Activated B cell treated with CpG ODN at 0.5 μM for 24 hours (primary cell): ENCODE measurements at regions of chr19 and their contacts with region 1.

Region 1: GRCh38 chr19:53520550-53521372 is 17.2 kb upstream of the ZNF331 start:
- DNase-seq: peak; percentile 71
- ATAC-seq: peak; percentile 97
- H3K4me3 Mint-ChIP-seq: peak overlapping the region; percentile 94
- H3K27ac Mint-ChIP-seq: peak overlapping the region; percentile 87
- H3K4me1 Mint-ChIP-seq: peaks cover 16% of the 10 kb centered on the region
- H3K27me3 Mint-ChIP-seq: no peaks in the 10 kb centered on the region
- CTCF ChIP-seq: no peak

Region 2: DNA sequence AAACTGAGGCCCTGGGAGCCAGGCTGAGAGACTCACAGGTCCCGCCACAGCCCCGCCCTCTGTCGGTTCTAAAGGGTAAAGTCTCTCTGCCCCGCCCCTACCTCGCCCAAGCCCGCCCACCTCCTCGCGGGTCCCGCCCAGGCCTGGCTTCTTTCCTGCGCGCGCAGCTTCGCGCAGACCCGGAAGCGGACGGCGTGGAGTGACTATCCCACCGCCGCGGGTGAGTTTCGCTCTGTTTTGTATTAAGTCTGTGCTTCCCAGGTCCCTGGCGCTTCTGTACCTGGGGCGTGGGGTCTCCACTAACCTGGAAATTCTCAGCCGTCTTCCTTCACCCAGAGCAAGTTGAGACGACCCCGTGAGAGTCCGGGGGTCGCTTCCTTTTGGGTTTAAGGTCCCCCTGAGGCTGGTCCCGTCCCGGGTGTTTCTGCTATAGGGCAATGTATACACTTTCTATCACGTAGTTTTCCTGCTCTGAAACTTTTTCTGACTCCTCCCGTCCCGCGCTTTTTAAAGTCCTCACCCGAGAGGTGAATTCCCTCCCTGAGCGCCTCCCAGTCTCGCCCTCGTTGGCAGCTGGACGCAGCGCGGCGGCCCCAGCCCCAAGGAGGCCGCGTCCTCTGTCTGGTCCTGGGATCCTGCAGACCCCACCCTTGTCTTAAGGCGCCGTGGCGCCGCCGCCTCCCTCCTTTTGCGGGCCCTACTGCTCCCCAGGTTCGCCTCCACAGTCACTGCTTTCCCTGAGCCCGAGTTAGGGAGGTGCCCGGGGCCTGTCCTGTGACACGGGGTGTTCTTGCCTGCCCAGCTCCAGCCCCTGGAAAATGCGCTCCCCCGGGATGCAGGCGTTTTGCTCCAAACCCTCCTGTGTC is 125.6 kb before region 1 on chr19 and contains the start of gene ZNF765:
- CTCF ChIA-PET with region 1: no interaction called
- POLR2A ChIA-PET with region 1: interaction called, 7 read pairs
- intact Hi-C with region 1: loop called (anchors 1 kb)
- DNase-seq: peak; percentile 98
- ATAC-seq: peak; percentile 99
- H3K4me3 Mint-ChIP-seq: peak within 1 kb of the TSS; percentile 95
- H3K27ac Mint-ChIP-seq: peak within 1 kb of the TSS; percentile 90
- H3K4me1 Mint-ChIP-seq: peaks cover 29% of the 10 kb centered on the region
- H3K27me3 Mint-ChIP-seq: no peaks in the 10 kb centered on the region
- CTCF ChIP-seq: no peak
- total RNA-seq, gene ZNF765: 16.2 and 18.9 TPM in 2 replicates

Region 3: GRCh38 chr19:53431399-53432087 is 89.2 kb before region 1 on chr19 and contains the start of gene ZNF761:
- CTCF ChIA-PET with region 1: no interaction called
- POLR2A ChIA-PET with region 1: interaction called, 5 read pairs
- intact Hi-C with region 1: loop called (anchors 2 kb)
- DNase-seq: peak; percentile 99
- ATAC-seq: peak; percentile 98
- H3K4me3 Mint-ChIP-seq: peak within 1 kb of the TSS; percentile 96
- H3K27ac Mint-ChIP-seq: peak within 1 kb of the TSS; percentile 94
- H3K4me1 Mint-ChIP-seq: peaks cover 34% of the 10 kb centered on the region
- H3K27me3 Mint-ChIP-seq: no peaks in the 10 kb centered on the region
- CTCF ChIP-seq: no peak
- total RNA-seq, gene ZNF761: 11.1 and 13.8 TPM in 2 replicates

Region 4: GRCh38 chr19:53467485-53468262 is 53.1 kb before region 1 on chr19 and contains the start of gene ZNF813:
- CTCF ChIA-PET with region 1: no interaction called
- POLR2A ChIA-PET with region 1: no interaction called
- intact Hi-C with region 1: loop called (anchors 1 kb)
- DNase-seq: peak; percentile 97
- ATAC-seq: peak; percentile 99
- H3K4me3 Mint-ChIP-seq: peak within 1 kb of the TSS; percentile 94
- H3K27ac Mint-ChIP-seq: peak within 1 kb of the TSS; percentile 90
- H3K4me1 Mint-ChIP-seq: peaks cover 32% of the 10 kb centered on the region
- H3K27me3 Mint-ChIP-seq: peaks cover 18% of the 10 kb centered on the region
- CTCF ChIP-seq: no peak
- total RNA-seq, gene ZNF813: 8.2 and 10.7 TPM in 2 replicates

Region 5: DNA sequence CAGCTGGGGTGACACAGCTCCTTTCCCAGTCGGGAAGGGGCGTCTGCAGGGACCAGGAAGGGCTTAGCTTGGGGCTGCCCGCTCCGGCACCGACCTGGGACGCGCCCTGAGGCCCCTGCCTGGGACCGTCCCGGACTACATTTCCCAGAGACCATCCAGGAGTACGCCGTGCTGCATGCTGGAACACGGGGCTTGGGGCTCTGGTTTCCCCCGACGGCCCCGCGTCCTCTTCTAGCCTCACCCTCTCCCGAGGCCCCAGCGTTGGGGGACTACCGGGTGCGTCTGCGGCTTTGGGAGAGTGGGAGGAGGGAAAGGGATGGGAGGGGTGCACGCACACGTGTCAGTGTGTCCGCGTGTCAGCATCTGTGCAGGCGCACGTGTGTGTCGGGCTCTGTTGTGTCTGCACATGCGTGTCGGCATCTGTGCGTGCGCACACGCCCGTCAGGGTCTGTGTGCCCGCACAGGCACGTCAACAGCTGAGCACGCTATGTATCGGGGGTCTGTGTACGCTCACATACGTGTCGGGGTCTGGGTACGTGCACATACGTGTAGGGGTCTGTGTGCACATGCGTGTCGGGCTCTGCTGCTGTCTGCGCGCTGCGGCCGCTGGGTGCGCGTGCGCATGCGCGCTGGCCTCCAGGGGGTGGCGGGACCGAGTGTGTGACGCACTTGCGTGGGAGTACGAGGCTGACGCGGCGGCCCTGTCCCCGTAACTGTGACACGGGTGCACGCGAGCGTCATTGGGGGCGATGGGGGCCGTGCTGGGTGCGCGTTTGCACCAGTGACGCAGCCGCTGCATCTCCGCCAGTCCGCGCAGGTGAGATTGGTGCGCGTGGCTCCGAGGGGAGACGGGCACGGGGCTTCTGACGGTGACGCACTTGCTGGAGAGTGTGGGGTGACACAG is 17.0 kb after region 1 on chr19 and contains the start of gene ZNF331:
- CTCF ChIA-PET with region 1: interaction called, 4 read pairs
- POLR2A ChIA-PET with region 1: interaction called, 18 read pairs
- intact Hi-C with region 1: loop called (anchors 1 kb)
- DNase-seq: peak; percentile 85
- ATAC-seq: peak; percentile 76
- H3K4me3 Mint-ChIP-seq: peak within 1 kb of the TSS; percentile 95
- H3K27ac Mint-ChIP-seq: peak within 1 kb of the TSS; percentile 95
- H3K4me1 Mint-ChIP-seq: peaks cover 18% of the 10 kb centered on the region
- H3K27me3 Mint-ChIP-seq: no peaks in the 10 kb centered on the region
- CTCF ChIP-seq: no peak
- total RNA-seq, gene ZNF331: 25.5 and 31.7 TPM in 2 replicates

Region 6: DNA sequence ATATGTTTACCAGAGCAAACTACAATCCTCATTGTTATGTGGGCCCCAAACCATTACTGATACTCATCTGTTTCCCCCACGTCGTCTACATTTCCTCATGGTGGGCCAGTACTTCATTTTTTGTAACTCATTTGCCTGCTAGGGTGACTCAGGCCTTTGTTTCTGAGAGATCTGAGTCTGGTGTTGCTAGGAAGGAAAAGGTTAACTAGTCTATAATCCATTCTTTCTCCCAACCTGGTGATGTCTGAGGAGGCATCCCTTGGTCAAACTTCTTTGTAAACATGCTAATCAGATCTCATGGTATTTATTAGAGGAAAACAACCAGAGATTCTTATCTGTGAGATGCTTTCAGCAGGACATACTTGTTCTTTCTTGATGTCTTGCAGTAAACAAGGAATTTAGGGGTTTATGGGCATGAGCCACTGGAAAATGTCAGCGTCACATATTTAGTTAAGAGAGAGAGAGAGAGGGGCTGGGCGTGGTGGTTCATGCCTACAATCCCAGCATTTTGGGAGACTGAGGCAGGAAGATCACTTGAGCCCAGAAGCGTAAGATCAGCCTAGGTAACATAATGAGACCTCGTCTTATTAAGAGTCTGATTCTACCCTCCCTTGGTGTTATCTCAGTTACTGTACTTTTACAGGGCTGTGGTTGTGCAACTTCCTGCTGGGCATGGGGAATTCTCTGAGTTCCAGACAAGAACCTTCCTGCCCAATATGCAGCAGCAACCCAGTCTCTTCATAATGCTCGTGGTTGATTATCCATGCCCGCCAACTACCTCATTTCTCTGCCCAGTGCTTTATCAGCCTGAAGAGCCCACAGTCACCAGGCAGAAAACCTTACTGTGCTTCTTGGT is 101.4 kb after region 1 on chr19:
- CTCF ChIA-PET with region 1: no interaction called
- POLR2A ChIA-PET with region 1: no interaction called
- intact Hi-C with region 1: no loop called
- DNase-seq: no peak
- ATAC-seq: no peak
- H3K4me3 Mint-ChIP-seq: no peak overlapping the region
- H3K27ac Mint-ChIP-seq: no peak overlapping the region
- H3K4me1 Mint-ChIP-seq: no peaks in the 10 kb centered on the region
- H3K27me3 Mint-ChIP-seq: no peaks in the 10 kb centered on the region
- CTCF ChIP-seq: no peak